ENCODE measurements at regions of chr1 and their contacts with region 1.

Region 1: DNA sequence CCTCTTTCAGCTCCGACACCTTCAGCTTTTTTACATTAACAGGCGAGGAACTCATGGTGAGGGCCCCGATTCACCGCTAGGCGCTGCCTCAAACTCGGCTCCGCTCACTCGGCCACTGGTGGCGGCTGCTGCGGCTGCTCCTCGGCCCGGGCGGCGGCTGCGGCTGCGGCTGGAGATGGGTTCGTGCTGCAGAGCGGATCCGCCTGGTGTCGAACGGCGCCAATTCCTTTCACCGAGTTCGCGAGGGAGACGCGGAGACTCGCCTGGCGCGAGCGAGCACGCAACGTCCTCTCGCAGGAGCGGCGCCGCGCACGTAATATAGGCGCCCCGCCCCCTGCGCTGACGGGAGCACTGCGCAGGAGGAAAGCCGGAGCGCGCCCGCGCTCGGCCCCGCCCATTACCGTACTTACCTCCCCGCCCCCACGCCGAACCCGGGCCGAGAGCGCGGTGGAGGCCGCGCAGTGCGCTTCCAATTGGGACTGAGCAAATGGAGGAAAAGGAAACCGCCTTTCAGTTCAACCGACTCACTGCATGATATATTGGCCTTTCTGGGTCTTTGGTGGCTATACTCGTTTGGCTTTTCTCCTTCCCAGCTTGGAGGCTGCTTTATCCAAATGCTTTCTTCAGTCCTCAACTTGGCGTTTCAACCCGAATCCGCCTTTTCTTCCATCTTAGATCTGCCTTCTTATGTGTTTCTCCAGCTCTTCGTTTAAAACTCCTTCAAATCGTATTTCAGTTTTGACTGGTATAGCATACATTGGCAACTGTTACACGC is at the start of gene HNRNPU:
- DNase-seq: peak; percentile 98
- ATAC-seq: peak; percentile 71
- H3K4me3 ChIP-seq: peak within 1 kb of the TSS; percentile 82 to 99 (median 98)
- H3K4me3 Mint-ChIP-seq: peak within 1 kb of the TSS; percentile 87
- H3K27ac ChIP-seq: peak within 1 kb of the TSS; percentile 98 to 99
- H3K27ac Mint-ChIP-seq: peak within 1 kb of the TSS; percentile 98
- H3K4me1 ChIP-seq: peaks cover 29 to 34% of the 10 kb centered on the region in 2 donors
- H3K4me1 Mint-ChIP-seq: peaks cover 36% of the 10 kb centered on the region
- H3K27me3 ChIP-seq: no peaks in the 10 kb centered on the region
- H3K27me3 Mint-ChIP-seq: no peaks in the 10 kb centered on the region
- CTCF ChIP-seq: peak; percentile 52
- total RNA-seq, gene HNRNPU: 406 and 415 TPM in 2 replicates

Region 2: DNA sequence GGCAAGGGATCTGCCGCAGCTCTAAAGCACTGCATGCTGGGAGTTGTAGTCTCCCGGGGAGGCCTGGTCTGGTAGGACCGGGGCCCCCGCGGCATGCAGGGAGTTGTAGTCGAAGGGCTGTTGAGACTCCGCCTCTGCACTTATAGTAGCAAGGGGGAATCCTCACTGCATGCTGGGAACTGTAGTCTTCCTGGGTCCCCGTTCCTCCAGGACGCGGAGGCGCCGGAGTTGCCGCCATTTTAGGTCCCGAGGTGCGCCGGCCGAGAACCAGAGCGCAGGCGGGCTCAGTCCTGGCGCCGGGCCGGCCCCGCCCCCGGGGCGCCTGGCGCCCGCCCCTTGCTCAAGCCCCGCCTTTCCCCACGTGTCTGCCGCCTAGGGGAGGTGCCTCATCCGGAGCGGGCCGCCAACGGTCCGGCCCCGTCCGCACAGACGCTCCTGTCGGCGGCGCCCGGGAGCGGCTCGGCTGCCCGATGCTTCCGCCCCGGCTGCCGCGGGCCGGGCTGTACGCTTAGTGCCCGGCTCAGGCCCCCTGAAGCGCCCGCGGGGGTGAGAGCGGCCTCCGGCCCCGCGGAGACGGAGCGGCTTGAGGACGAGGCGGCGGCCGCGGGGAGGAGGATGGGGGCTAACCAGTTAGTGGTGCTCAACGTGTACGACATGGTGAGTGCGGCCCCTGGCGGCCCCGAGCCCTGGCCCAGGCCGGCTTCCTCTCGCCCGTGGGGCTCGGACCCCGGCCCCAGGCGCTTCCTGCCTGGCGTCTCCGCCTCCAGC is 211.6 kb before region 1 on chr1 and contains the start of gene DESI2:
- CTCF ChIA-PET with region 1: no interaction called
- POLR2A ChIA-PET with region 1: interaction called, 4 read pairs
- intact Hi-C with region 1: loop called (anchors 1 kb)
- DNase-seq: peak; percentile 99
- ATAC-seq: peak; percentile 87
- H3K4me3 ChIP-seq: peak within 1 kb of the TSS; percentile 51 to 91 (median 81)
- H3K4me3 Mint-ChIP-seq: no peak within 1 kb of the TSS
- H3K27ac ChIP-seq: peak within 1 kb of the TSS; percentile 64 to 88
- H3K27ac Mint-ChIP-seq: peak within 1 kb of the TSS; percentile 93
- H3K4me1 ChIP-seq: peaks cover 23 to 24% of the 10 kb centered on the region in 2 donors
- H3K4me1 Mint-ChIP-seq: peaks cover 20% of the 10 kb centered on the region
- H3K27me3 ChIP-seq: no peaks in the 10 kb centered on the region
- H3K27me3 Mint-ChIP-seq: no peaks in the 10 kb centered on the region
- CTCF ChIP-seq: peak; percentile 65
- total RNA-seq, gene DESI2: 25.2 and 25.9 TPM in 2 replicates

Region 3: DNA sequence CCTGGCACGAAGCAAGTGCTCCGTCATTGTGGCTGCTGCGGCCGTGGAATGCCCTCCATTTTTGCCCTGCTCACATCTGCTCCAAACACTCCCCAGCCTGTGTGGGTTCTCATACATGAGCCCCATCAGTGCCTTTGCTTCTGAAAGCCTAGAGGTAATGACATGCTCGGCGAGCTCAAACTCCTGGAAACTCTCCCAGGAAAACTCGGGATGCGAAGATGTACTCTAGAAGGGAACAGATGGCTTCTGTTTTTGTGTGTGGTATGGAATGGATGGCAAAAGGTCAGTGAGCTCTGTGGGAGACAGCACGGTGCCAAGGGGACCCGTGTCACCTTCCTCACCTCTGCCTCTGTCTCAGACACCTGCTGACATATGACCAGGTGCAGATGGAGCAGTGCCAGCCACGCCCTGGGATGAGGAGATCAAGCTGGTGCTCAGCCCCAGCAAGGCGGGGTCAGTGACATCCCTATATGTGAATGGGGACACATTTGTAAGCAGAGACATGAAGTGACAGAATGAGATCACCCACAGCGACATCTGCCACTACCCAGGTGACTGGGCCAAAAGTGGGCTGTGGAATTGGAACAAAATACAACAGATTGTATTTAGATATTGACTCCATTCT is 113.1 kb before region 1 on chr1:
- CTCF ChIA-PET with region 1: no interaction called
- POLR2A ChIA-PET with region 1: no interaction called
- intact Hi-C with region 1: no loop called
- DNase-seq: no peak
- ATAC-seq: no peak
- H3K4me3 ChIP-seq: no peak overlapping the region
- H3K4me3 Mint-ChIP-seq: no peak overlapping the region
- H3K27ac ChIP-seq: no peak overlapping the region
- H3K27ac Mint-ChIP-seq: no peak overlapping the region
- H3K4me1 ChIP-seq: no peaks in the 10 kb centered on the region
- H3K4me1 Mint-ChIP-seq: no peaks in the 10 kb centered on the region
- H3K27me3 ChIP-seq: no peaks in the 10 kb centered on the region
- H3K27me3 Mint-ChIP-seq: no peaks in the 10 kb centered on the region
- CTCF ChIP-seq: no peak

Region 4: DNA sequence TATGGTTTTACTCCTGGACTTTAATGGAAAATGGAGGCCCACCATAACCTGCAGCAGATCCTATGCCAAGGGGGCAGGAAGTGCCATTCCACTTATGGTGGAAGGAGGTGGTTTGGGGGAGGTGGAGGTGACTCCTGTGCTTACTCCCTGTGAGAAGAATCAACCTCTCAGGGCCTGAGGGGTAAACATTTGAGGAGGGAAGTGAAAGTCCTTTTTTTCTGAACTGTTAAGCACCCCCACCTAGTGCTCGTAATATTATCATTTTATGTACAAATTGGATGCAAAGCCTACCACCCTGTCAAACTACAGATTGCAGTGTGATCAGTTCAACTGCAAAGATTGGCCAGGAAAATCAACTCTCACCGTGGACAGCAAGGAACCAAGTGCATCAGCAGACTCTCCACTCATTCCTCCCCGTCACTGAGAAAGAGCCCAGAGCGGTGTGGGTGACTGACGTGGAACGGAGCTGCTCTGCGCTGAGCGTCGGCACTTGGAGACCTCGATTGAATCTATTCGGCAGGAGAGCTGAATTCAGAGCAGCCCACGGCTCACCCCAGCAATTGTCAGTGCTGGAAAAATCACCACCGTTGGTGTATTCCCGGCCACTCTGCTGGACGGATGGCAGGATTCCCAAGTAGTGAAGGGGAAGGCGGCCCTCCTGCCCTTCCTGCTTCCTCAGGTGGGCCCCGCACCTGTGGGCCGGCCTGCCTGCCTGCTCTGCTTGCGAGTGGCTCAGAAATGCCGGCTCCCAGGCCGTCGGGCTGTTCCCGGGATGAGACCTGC is 75.8 kb before region 1 on chr1:
- CTCF ChIA-PET with region 1: no interaction called
- POLR2A ChIA-PET with region 1: no interaction called
- intact Hi-C with region 1: no loop called
- DNase-seq: peak; percentile 37
- ATAC-seq: peak; percentile 36
- H3K4me3 ChIP-seq: no peak overlapping the region
- H3K4me3 Mint-ChIP-seq: no peak overlapping the region
- H3K27ac ChIP-seq: no peak overlapping the region
- H3K27ac Mint-ChIP-seq: no peak overlapping the region
- H3K4me1 ChIP-seq: peaks cover 5 to 10% of the 10 kb centered on the region in 2 donors
- H3K4me1 Mint-ChIP-seq: peaks cover 10% of the 10 kb centered on the region
- H3K27me3 ChIP-seq: no peaks in the 10 kb centered on the region
- H3K27me3 Mint-ChIP-seq: no peaks in the 10 kb centered on the region
- CTCF ChIP-seq: no peak

Region 5: DNA sequence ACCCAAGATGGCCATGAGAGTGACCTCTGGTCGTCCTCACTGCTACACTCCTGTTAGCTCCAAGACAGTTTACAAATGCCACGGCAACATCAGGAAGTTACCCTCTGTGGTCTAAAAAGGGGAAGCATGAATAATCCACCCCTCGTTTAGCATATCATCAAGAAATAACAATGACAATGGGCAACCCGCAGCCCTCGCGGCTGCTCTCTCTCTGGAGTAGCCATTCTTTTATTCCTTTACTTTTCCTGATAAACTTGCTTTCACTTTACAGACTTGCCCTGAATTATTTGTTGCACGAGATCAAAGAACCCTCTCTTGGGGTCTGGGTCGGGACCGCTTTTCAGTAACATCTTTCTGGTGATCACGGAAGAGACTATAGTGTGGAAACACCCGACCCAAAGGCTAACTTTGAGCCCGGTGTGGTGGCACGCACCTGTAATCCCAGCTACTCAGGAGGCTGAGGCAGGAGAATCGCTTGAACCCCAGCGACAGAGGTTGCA is 48.8 kb before region 1 on chr1:
- CTCF ChIA-PET with region 1: interaction called, 4 read pairs
- POLR2A ChIA-PET with region 1: interaction called, 6 read pairs
- intact Hi-C with region 1: loop called (anchors 1 kb)
- DNase-seq: peak; percentile 76
- ATAC-seq: peak; percentile 69
- H3K4me3 ChIP-seq: peak overlapping the region; percentile 47 to 68 (median 55)
- H3K4me3 Mint-ChIP-seq: peak overlapping the region; percentile 82
- H3K27ac ChIP-seq: peak overlapping the region; percentile 10 to 16
- H3K27ac Mint-ChIP-seq: peak overlapping the region; percentile 73
- H3K4me1 ChIP-seq: peaks cover 20 to 28% of the 10 kb centered on the region in 2 donors
- H3K4me1 Mint-ChIP-seq: peaks cover 27% of the 10 kb centered on the region
- H3K27me3 ChIP-seq: no peaks in the 10 kb centered on the region
- H3K27me3 Mint-ChIP-seq: no peaks in the 10 kb centered on the region
- CTCF ChIP-seq: no peak

Region 6: GRCh38 chr1:244901400-244902015 is 37.1 kb after region 1 on chr1:
- CTCF ChIA-PET with region 1: no interaction called
- POLR2A ChIA-PET with region 1: no interaction called
- intact Hi-C with region 1: no loop called
- DNase-seq: no peak
- ATAC-seq: no peak
- H3K4me3 ChIP-seq: no peak overlapping the region
- H3K4me3 Mint-ChIP-seq: no peak overlapping the region
- H3K27ac ChIP-seq: no peak overlapping the region
- H3K27ac Mint-ChIP-seq: no peak overlapping the region
- H3K4me1 ChIP-seq: no peaks in the 10 kb centered on the region
- H3K4me1 Mint-ChIP-seq: no peaks in the 10 kb centered on the region
- H3K27me3 ChIP-seq: no peaks in the 10 kb centered on the region
- H3K27me3 Mint-ChIP-seq: no peaks in the 10 kb centered on the region
- CTCF ChIP-seq: no peak

Region 7: GRCh38 chr1:244918421-244919319 is 54.2 kb after region 1 on chr1:
- CTCF ChIA-PET with region 1: interaction called, 3 read pairs
- POLR2A ChIA-PET with region 1: interaction called, 7 read pairs
- intact Hi-C with region 1: loop called (anchors 1 kb)
- DNase-seq: peak; percentile 84
- ATAC-seq: peak; percentile 86
- H3K4me3 ChIP-seq: peak overlapping the region; percentile 51 to 66 (median 61)
- H3K4me3 Mint-ChIP-seq: peak overlapping the region; percentile 95
- H3K27ac ChIP-seq: peak overlapping the region; percentile 15 to 38
- H3K27ac Mint-ChIP-seq: no peak overlapping the region
- H3K4me1 ChIP-seq: peaks cover 27 to 30% of the 10 kb centered on the region in 2 donors
- H3K4me1 Mint-ChIP-seq: peaks cover 23% of the 10 kb centered on the region
- H3K27me3 ChIP-seq: no peaks in the 10 kb centered on the region
- H3K27me3 Mint-ChIP-seq: peaks cover 6% of the 10 kb centered on the region
- CTCF ChIP-seq: no peak

Region 8: GRCh38 chr1:245031041-245031440 is 166.6 kb after region 1 on chr1:
- CTCF ChIA-PET with region 1: no interaction called
- POLR2A ChIA-PET with region 1: interaction called, 11 read pairs
- intact Hi-C with region 1: no loop called
- DNase-seq: no peak
- ATAC-seq: no peak
- H3K4me3 ChIP-seq: no peak overlapping the region
- H3K4me3 Mint-ChIP-seq: no peak overlapping the region
- H3K27ac ChIP-seq: no peak overlapping the region
- H3K27ac Mint-ChIP-seq: no peak overlapping the region
- H3K4me1 ChIP-seq: no peaks in the 10 kb centered on the region
- H3K4me1 Mint-ChIP-seq: no peaks in the 10 kb centered on the region
- H3K27me3 ChIP-seq: no peaks in the 10 kb centered on the region
- H3K27me3 Mint-ChIP-seq: no peaks in the 10 kb centered on the region
- CTCF ChIP-seq: no peak

Region 9: GRCh38 chr1:245051349-245052221 is 187.1 kb after region 1 on chr1:
- CTCF ChIA-PET with region 1: no interaction called
- POLR2A ChIA-PET with region 1: no interaction called
- intact Hi-C with region 1: no loop called
- DNase-seq: peak; percentile 13
- ATAC-seq: no peak
- H3K4me3 ChIP-seq: peak overlapping the region in 2 of 5 experiments; percentile 3 to 55
- H3K4me3 Mint-ChIP-seq: peak overlapping the region; percentile 37
- H3K27ac ChIP-seq: no peak overlapping the region
- H3K27ac Mint-ChIP-seq: no peak overlapping the region
- H3K4me1 ChIP-seq: peaks cover 12% of the 10 kb centered on the region in 2 donors
- H3K4me1 Mint-ChIP-seq: peaks cover 12% of the 10 kb centered on the region
- H3K27me3 ChIP-seq: peaks cover 0 to 5% (median 0%) of the 10 kb centered on the region in 4 experiments
- H3K27me3 Mint-ChIP-seq: peaks cover 18% of the 10 kb centered on the region
- CTCF ChIP-seq: no peak